CD4-positive, alpha-beta memory T cell (primary cell): ENCODE measurements at regions of chr13 and their contacts with region 1.

Region 1: GRCh38 chr13:113976711-113977684 is 3.1 kb upstream of the C13orf46 start:
- DNase-seq: no peak
- H3K4me3 ChIP-seq: no peak overlapping the region
- H3K4me3 Mint-ChIP-seq: peak overlapping the region in 1 of 8 donors; percentile 17
- H3K27ac ChIP-seq: no peak overlapping the region
- H3K27ac Mint-ChIP-seq: peak overlapping the region in 3 of 7 donors; percentile 22 to 91 (median 54)
- H3K4me1 ChIP-seq: no peaks in the 10 kb centered on the region
- H3K4me1 Mint-ChIP-seq: peaks cover 0 to 6% (median 4%) of the 10 kb centered on the region in 4 donors
- H3K27me3 ChIP-seq: no peaks in the 10 kb centered on the region
- H3K27me3 Mint-ChIP-seq: no peaks in the 10 kb centered on the region

Region 2: GRCh38 chr13:113995051-113995601 is 18.1 kb after region 1 on chr13:
- CTCF ChIA-PET with region 1: interaction called, 3 read pairs
- POLR2A ChIA-PET with region 1: interaction called, 10 read pairs
- intact Hi-C with region 1: no loop called
- DNase-seq: peak in 1 of 5 donors; percentile 13
- H3K4me3 ChIP-seq: no peak overlapping the region
- H3K4me3 Mint-ChIP-seq: peak overlapping the region in 1 of 8 donors; percentile 6
- H3K27ac ChIP-seq: no peak overlapping the region
- H3K27ac Mint-ChIP-seq: peak overlapping the region in 3 of 7 donors; percentile 3 to 19 (median 8)
- H3K4me1 ChIP-seq: no peaks in the 10 kb centered on the region
- H3K4me1 Mint-ChIP-seq: peaks cover 0 to 6% (median 4%) of the 10 kb centered on the region in 4 donors
- H3K27me3 ChIP-seq: no peaks in the 10 kb centered on the region
- H3K27me3 Mint-ChIP-seq: no peaks in the 10 kb centered on the region

Region 3: GRCh38 chr13:114025714-114026431 is 48.9 kb after region 1 on chr13:
- CTCF ChIA-PET with region 1: no interaction called
- POLR2A ChIA-PET with region 1: no interaction called
- intact Hi-C with region 1: no loop called
- DNase-seq: no peak
- H3K4me3 ChIP-seq: no peak overlapping the region
- H3K4me3 Mint-ChIP-seq: no peak overlapping the region
- H3K27ac ChIP-seq: no peak overlapping the region
- H3K27ac Mint-ChIP-seq: peak overlapping the region in 3 of 7 donors; percentile 42 to 82 (median 81)
- H3K4me1 ChIP-seq: peaks cover under 1% of the 10 kb centered on the region
- H3K4me1 Mint-ChIP-seq: peaks cover 4 to 9% (median 4%) of the 10 kb centered on the region in 4 donors
- H3K27me3 ChIP-seq: no peaks in the 10 kb centered on the region
- H3K27me3 Mint-ChIP-seq: no peaks in the 10 kb centered on the region

Region 4: DNA sequence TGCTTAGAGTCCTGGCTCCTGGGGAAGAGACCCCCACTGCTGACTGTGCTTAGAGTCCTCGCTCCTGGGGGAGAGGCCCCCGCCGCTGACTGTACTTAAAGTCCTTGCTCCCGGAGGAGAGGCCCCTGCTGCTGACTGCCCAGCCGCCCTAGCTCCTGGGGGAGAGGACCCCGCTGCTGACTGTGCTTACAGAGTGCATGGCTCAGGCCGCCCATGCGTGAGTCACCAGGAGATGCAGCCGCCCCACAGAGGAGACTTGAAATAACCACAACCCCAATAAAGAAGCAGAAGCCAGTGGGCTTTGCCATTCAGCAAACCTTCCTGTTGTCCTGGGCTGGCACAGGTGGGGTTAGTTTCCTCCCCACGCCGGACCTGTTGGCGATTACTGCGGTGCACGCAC is 76.0 kb after region 1 on chr13:
- CTCF ChIA-PET with region 1: no interaction called
- POLR2A ChIA-PET with region 1: no interaction called
- intact Hi-C with region 1: no loop called
- DNase-seq: no peak
- H3K4me3 ChIP-seq: no peak overlapping the region
- H3K4me3 Mint-ChIP-seq: no peak overlapping the region
- H3K27ac ChIP-seq: no peak overlapping the region
- H3K27ac Mint-ChIP-seq: peak overlapping the region in 4 of 7 donors; percentile 41 to 78 (median 58)
- H3K4me1 ChIP-seq: peaks cover 53% of the 10 kb centered on the region
- H3K4me1 Mint-ChIP-seq: peaks cover 16 to 70% (median 34%) of the 10 kb centered on the region in 4 donors
- H3K27me3 ChIP-seq: no peaks in the 10 kb centered on the region
- H3K27me3 Mint-ChIP-seq: no peaks in the 10 kb centered on the region